ENCODE measurements at regions of chr3 and their contacts with region 1.

Region 1: DNA sequence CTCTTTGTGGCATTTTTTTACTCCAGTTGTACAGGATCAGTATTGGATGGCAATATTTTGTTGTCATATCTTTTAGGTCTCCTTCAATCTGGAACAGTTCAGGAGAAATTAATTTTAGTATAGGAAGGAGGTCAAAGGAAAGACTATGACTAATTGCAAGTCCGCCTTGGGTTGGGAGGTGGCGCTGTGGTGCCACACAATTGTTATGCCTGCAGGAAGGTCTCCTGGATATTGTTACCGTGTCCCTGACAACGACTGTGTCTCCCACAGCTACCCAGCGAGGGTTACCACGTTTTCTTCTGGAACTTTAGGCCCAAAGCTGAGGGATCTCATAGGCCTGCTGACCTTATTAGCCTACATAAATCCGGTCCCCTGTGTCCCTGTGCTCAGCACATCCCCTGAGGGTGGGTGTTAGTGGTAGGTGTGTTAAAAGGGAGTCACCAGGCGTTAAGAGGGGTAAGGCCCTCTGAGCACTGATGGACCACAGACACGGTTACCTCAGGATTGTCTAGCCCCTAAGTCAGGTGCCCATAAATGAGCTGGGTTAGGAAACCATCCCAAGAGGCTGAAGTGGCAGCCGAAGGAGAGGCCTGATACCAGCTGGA is 31.5 kb downstream of the KCNAB1 start:
- DNase-seq: peak; percentile 45 to 54
- ATAC-seq: peak; percentile 56 to 76 (median 70)
- H3K4me3 ChIP-seq: no peak overlapping the region
- H3K27ac ChIP-seq: no peak overlapping the region
- H3K4me1 ChIP-seq: peaks cover 6% of the 10 kb centered on the region
- H3K27me3 ChIP-seq: no peaks in the 10 kb centered on the region
- CTCF ChIP-seq: peak; percentile 55

Region 2: GRCh38 chr3:156449712-156450574 is 298.0 kb after region 1 on chr3:
- intact Hi-C with region 1: loop called in 1 of 2 experiments (anchors 5 kb)
- DNase-seq: no peak
- ATAC-seq: peak in 1 of 4 donors; percentile 53
- H3K4me3 ChIP-seq: no peak overlapping the region
- H3K27ac ChIP-seq: no peak overlapping the region
- H3K4me1 ChIP-seq: no peaks in the 10 kb centered on the region
- H3K27me3 ChIP-seq: no peaks in the 10 kb centered on the region
- CTCF ChIP-seq: peak; percentile 53

Region 3: DNA sequence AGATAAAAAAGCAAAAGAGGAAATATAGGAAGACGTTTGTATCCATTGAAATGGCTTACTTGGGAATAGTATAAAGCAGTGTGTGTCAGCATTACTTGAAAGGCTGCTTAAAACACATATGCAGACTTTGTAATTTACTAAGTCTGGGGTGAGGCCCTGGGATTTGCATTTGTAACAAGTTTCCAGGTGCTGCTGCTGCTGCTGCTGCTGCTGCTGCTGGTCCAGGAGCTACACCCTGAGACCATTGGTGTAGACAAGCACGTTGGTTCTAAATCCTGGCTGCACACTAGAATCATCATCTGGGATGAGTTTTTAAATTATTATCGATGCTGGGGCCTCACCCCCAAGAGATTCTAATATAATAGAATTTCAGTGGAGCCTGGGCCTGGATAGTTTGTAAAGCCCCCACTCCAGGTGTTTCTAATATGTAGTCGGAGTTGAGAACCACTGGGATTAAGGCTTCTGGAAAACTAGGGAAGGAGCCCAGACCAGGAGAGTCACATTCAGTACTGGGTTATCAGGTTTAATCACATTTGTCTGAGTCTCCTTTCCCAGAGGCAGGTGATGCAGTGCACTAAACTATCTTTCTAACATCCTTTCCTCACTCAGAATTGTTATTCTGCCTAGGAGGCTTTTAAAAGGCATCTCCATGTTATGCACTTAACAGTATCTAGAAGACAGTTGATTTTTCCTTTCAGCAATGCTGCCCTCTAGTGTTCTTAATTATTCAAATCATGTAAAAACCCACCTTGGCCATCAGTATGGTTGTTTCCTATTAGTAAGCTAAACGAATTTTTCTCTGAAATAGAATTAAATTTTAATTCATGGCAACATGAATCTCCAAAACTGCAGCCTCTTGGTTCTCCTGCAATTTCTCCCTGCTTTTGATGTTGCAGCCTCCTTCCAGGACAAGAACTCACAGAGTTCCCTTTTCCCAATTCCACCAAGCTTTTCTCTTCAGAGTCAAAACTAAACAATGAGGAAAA is 357.6 kb after region 1 on chr3:
- intact Hi-C with region 1: loop called (anchors 1 to 2 kb)
- DNase-seq: no peak
- ATAC-seq: peak; percentile 47 to 80 (median 50)
- H3K4me3 ChIP-seq: no peak overlapping the region
- H3K27ac ChIP-seq: no peak overlapping the region
- H3K4me1 ChIP-seq: no peaks in the 10 kb centered on the region
- H3K27me3 ChIP-seq: no peaks in the 10 kb centered on the region
- CTCF ChIP-seq: peak; percentile 72

Region 4: DNA sequence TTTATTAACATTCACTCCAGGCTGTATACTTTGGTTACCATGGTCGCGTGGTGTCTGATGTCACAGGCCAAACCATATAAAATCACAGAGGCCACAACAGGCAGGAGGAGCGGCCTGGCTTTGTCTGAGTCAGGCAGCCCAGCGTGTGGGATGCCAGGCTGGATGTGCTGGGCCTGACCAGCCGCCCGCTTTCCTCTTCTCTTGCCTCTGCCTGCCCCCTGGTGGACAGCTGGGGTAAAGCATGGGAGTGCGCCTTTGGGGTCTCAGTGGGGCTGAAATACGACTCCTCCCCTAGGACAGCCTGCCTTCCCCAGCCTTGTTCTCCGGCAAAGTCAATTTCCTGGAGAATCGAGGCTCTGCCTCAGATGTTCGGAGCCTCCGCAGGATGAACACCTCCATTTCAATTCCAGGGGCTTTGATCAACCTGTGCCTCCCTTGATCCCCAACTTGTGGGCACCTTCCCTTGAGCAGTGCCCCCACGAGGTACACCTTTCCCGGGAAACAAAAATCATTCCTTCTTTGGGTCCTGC is 929.8 kb after region 1 on chr3:
- intact Hi-C with region 1: loop called (anchors 5 to 10 kb)
- DNase-seq: peak; percentile 91 to 95
- ATAC-seq: peak; percentile 83 to 90 (median 88)
- H3K4me3 ChIP-seq: no peak overlapping the region
- H3K27ac ChIP-seq: no peak overlapping the region
- H3K4me1 ChIP-seq: peaks cover 19% of the 10 kb centered on the region
- H3K27me3 ChIP-seq: no peaks in the 10 kb centered on the region
- CTCF ChIP-seq: peak; percentile 98